Activated CD4-positive, alpha-beta T cell treated with anti-CD3 and anti-CD28 coated beads for 36 hours (primary cell): ENCODE measurements at regions of chr7 and their contacts with region 1.

Region 1: DNA sequence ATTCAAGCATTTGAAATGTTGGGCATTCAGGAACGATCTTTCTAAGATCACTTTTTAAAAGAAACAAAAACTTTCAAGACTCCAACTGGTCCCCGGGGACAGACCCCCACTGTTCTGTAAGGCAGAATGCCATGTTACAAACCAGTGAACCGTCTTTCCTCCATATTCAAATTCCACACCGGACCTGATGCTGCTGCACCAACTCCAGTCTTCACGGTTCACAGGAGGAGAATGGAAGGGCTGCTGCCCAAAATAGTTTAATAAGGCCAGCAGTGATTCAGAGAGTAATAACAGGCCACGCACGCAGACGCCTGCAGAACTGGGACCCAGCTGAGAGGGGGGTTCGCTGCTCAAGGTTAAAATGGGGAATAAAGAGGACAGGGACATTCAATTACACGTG is 47.2 kb downstream of the OSBPL3 start:
- DNase-seq: no peak
- ATAC-seq: no peak
- H3K4me3 Mint-ChIP-seq: no peak overlapping the region
- H3K27ac Mint-ChIP-seq: no peak overlapping the region
- H3K4me1 Mint-ChIP-seq: peaks cover 44% of the 10 kb centered on the region
- H3K27me3 Mint-ChIP-seq: no peaks in the 10 kb centered on the region

Region 2: GRCh38 chr7:24946467-24946866 is 13.7 kb after region 1 on chr7:
- CTCF ChIA-PET with region 1: interaction called, 12 read pairs
- POLR2A ChIA-PET with region 1: no interaction called
- intact Hi-C with region 1: no loop called
- DNase-seq: no peak
- ATAC-seq: no peak
- H3K4me3 Mint-ChIP-seq: no peak overlapping the region
- H3K27ac Mint-ChIP-seq: no peak overlapping the region
- H3K4me1 Mint-ChIP-seq: peaks cover 47% of the 10 kb centered on the region
- H3K27me3 Mint-ChIP-seq: no peaks in the 10 kb centered on the region

Region 3: GRCh38 chr7:25369786-25370185 is 437.0 kb after region 1 on chr7:
- CTCF ChIA-PET with region 1: no interaction called
- POLR2A ChIA-PET with region 1: no interaction called
- intact Hi-C with region 1: no loop called
- DNase-seq: no peak
- ATAC-seq: no peak
- H3K4me3 Mint-ChIP-seq: no peak overlapping the region
- H3K27ac Mint-ChIP-seq: no peak overlapping the region
- H3K4me1 Mint-ChIP-seq: no peaks in the 10 kb centered on the region
- H3K27me3 Mint-ChIP-seq: peaks cover 9% of the 10 kb centered on the region

Region 4: GRCh38 chr7:25454562-25455041 is 521.8 kb after region 1 on chr7:
- CTCF ChIA-PET with region 1: no interaction called
- POLR2A ChIA-PET with region 1: no interaction called
- intact Hi-C with region 1: no loop called
- DNase-seq: no peak
- ATAC-seq: no peak
- H3K4me3 Mint-ChIP-seq: no peak overlapping the region
- H3K27ac Mint-ChIP-seq: no peak overlapping the region
- H3K4me1 Mint-ChIP-seq: no peaks in the 10 kb centered on the region
- H3K27me3 Mint-ChIP-seq: peaks cover 6% of the 10 kb centered on the region